Stomach (tissue), 19 donors: ENCODE measurements at regions of chr17 and their contacts with region 1.

Region 1: DNA sequence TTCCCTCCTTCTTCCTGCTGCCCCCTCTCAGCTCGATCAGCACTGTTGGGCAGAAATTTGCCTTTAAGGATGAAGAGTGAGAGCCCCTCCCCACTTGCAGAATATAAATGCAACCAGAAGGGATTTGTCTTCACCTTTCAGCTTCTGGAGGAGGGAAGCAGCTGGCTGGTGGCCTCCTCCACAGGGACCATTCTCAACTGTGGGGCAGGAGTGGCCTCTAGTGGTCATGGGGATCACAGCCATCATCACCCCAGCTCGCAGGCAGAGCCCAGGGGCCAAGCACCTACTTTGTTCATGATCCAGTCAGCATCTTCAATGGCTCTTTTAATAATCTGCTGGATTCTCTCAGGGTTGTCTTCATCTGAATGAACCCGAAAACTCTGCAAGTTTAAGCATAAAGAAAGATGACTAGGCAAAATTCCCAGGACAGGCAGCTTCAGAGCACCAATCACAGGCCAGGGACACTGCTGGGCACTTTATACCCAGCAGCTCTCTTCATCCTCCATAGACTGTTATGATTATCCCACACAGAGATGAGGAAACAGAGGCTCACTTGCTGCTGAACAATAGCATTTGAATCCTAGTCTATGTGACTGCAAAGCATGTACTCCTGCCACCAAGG is 13.1 kb downstream of the LYRM9 start:
- DNase-seq: peak; percentile 74 to 92
- H3K4me3 ChIP-seq: no peak overlapping the region
- H3K27ac ChIP-seq: no peak overlapping the region
- H3K4me1 ChIP-seq: no peaks in the 10 kb centered on the region
- H3K27me3 ChIP-seq: no peaks in the 10 kb centered on the region
- CTCF ChIP-seq: peak in 5 of 7 experiments; percentile 58 to 73 (median 65)
- EP300 ChIP-seq: no peak
- POLR2A ChIP-seq: no peak

Region 2: DNA sequence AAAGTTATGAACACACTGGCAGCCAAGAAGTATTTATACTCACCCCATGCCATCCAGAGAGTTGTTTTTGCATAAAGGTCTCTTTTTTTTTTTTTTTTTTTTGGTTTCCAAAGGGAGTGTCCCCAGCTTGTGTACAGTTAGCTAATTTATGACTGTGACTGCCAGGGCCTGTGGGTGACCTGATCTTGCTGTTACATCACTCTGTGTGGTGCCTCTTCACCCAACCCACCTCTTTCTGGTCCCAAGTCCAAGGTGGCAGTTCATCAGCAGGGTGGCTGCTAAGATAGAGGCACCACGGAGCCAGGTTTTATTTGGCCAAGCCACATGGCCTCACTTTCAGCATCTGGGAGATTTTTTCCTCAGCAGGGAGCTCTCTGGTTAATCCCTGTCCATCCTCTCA is 79.6 kb before region 1 on chr17 and contains the start of gene NOS2:
- intact Hi-C with region 1: loop called (anchors 5 kb)
- DNase-seq: no peak
- H3K4me3 ChIP-seq: no peak within 1 kb of the TSS
- H3K27ac ChIP-seq: no peak within 1 kb of the TSS
- H3K4me1 ChIP-seq: peaks cover 0 to 4% (median 2%) of the 10 kb centered on the region in 4 donors
- H3K27me3 ChIP-seq: peaks cover 0 to 18% (median 0%) of the 10 kb centered on the region in 3 donors
- CTCF ChIP-seq: no peak
- EP300 ChIP-seq: no peak
- POLR2A ChIP-seq: no peak
- total RNA-seq, gene NOS2: 0.18 to 0.87 TPM in 2 of 5 donors, not detected in the others

Region 3: DNA sequence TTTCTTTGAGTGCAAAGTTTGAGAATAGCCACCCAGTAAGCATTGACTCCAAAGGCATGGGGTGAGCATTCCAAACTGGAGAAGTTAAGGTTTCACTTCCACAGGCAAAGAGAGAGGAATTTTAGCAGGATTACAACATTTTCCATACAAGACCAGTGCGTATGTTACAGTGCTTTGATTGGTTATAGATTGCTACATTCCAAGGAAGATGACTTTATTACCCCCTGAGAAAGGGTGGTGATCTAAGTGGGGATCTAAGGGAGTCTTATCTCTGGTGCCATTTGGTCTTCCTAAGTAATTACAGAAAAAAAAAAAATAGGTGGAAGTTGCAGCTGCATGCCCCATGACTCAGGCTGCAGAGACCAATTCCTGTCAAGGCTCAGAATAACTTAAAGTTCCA is 514.6 kb after region 1 on chr17:
- intact Hi-C with region 1: no loop called
- DNase-seq: no peak
- H3K4me3 ChIP-seq: no peak overlapping the region
- H3K27ac ChIP-seq: no peak overlapping the region
- H3K4me1 ChIP-seq: peaks cover 0 to 8% (median 0%) of the 10 kb centered on the region in 4 donors
- H3K27me3 ChIP-seq: no peaks in the 10 kb centered on the region
- CTCF ChIP-seq: no peak
- EP300 ChIP-seq: no peak
- POLR2A ChIP-seq: no peak